Left cardiac atrium (tissue), 4 donors: ENCODE measurements at regions of chr4 and their contacts with region 1.

Region 1: GRCh38 chr4:174217273-174218126 is 66.0 kb downstream of the FBXO8 start:
- DNase-seq: peak; percentile 45
- ATAC-seq: peak; percentile 61 to 76

Region 2: GRCh38 chr4:173135241-173135847 is 1082.2 kb before region 1 on chr4:
- intact Hi-C with region 1: no loop called
- DNase-seq: no peak
- ATAC-seq: no peak

Region 3: DNA sequence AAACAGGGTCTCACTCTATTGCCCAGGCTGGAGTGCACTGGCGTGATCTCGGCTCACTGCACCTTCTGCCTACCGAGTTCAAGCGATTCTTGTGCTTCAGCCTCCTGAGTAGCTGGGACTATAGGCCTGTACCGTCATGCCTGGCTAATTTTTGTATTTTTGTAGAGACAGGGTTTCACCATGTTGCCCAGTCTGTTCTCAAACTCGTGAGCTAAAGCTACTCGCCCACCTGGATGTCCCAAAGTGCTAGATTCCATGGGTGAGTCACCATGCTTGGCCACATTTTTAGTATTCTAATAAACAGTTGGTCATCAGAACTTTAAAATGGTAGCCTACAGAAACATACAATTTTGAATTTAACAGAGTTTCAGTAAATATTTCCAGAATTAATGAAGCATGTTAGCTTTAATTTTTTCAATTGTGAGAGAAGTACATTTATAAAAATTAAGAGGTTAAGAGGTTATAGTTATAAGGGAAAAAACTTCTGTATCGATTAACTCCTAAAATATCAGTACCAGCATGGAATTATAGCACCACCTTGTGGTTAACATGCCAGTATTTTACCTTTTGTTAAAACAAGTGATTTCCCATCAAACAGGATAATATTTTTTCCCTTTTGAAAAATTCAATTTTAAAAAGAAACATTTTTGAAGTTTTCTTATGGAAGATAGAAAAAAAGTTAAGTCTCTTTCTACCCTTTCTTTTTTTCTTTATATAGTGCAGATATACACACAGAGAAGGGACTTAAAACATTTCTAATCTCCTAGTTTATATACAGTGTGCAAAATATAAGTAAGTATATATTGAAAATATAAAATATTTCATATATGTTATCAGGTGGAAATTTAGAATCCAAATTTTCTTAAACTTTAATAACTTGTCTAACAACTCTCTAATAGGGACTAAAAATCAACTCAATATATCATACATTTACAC is 101.6 kb after region 1 on chr4:
- intact Hi-C with region 1: loop called in 1 of 2 experiments (anchors 5 kb)
- DNase-seq: no peak
- ATAC-seq: no peak

Region 4: DNA sequence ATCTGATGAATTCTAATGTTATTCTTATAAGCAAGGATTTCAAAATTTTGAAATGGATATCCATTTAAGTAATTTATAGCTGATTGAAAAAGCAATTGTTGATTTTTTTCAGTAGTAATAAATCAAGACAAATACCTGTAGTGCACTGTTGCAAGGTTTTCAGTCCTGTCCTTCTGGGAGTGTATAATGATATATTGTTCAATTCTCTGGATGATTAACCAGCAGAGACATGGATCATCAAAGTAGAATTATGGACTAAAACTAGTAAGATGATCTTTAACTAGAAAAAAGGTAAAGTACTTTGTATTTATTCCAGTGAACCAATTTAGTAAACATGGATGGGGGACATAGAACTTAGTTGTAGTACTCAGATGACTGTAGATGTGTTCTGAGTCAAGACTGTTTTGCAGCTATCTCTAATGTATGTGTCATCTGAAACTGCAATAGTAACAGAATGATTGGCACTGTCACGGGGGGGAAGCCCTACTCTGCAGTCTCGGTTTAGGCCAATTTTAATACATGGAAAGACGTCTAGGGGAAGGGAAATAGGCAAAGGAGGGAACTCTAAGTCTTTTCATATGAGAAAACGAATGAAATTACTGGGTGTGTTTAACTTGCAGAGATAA is 489.7 kb after region 1 on chr4:
- intact Hi-C with region 1: no loop called
- DNase-seq: no peak
- ATAC-seq: no peak